CD4-positive, alpha-beta memory T cell (primary cell): ENCODE measurements at regions of chr14 and their contacts with region 1.

Region 1: GRCh38 chr14:76918751-76919543 is 92.7 kb downstream of the LRRC74A start:
- DNase-seq: no peak
- H3K4me3 ChIP-seq: no peak overlapping the region
- H3K4me3 Mint-ChIP-seq: peak overlapping the region in 1 of 8 donors; percentile 15
- H3K27ac ChIP-seq: no peak overlapping the region
- H3K27ac Mint-ChIP-seq: peak overlapping the region in 2 of 7 donors; percentile 46 to 57
- H3K4me1 ChIP-seq: peaks cover 32% of the 10 kb centered on the region
- H3K4me1 Mint-ChIP-seq: peaks cover 18 to 59% (median 43%) of the 10 kb centered on the region in 4 donors
- H3K27me3 ChIP-seq: no peaks in the 10 kb centered on the region
- H3K27me3 Mint-ChIP-seq: no peaks in the 10 kb centered on the region

Region 2: GRCh38 chr14:75989134-75989533 is 929.8 kb before region 1 on chr14:
- CTCF ChIA-PET with region 1: no interaction called
- POLR2A ChIA-PET with region 1: no interaction called
- intact Hi-C with region 1: no loop called
- DNase-seq: no peak
- H3K4me3 ChIP-seq: no peak overlapping the region
- H3K4me3 Mint-ChIP-seq: no peak overlapping the region
- H3K27ac ChIP-seq: no peak overlapping the region
- H3K27ac Mint-ChIP-seq: no peak overlapping the region
- H3K4me1 ChIP-seq: peaks cover 13% of the 10 kb centered on the region
- H3K4me1 Mint-ChIP-seq: peaks cover 9 to 23% (median 14%) of the 10 kb centered on the region in 4 donors
- H3K27me3 ChIP-seq: no peaks in the 10 kb centered on the region
- H3K27me3 Mint-ChIP-seq: no peaks in the 10 kb centered on the region

Region 3: GRCh38 chr14:76876076-76876475 is 42.9 kb before region 1 on chr14:
- CTCF ChIA-PET with region 1: interaction called, 162 read pairs
- POLR2A ChIA-PET with region 1: interaction called, 3 read pairs
- intact Hi-C with region 1: no loop called
- DNase-seq: peak in 4 of 5 donors; percentile 41 to 50 (median 44)
- H3K4me3 ChIP-seq: no peak overlapping the region
- H3K4me3 Mint-ChIP-seq: no peak overlapping the region
- H3K27ac ChIP-seq: no peak overlapping the region
- H3K27ac Mint-ChIP-seq: peak overlapping the region in 2 of 7 donors; percentile 10 to 31
- H3K4me1 ChIP-seq: no peaks in the 10 kb centered on the region
- H3K4me1 Mint-ChIP-seq: no peaks in the 10 kb centered on the region
- H3K27me3 ChIP-seq: no peaks in the 10 kb centered on the region
- H3K27me3 Mint-ChIP-seq: peaks cover 0 to 3% of the 10 kb centered on the region in 2 donors

Region 4: GRCh38 chr14:76947078-76947837 is 28.3 kb after region 1 on chr14:
- CTCF ChIA-PET with region 1: interaction called, 49 read pairs
- POLR2A ChIA-PET with region 1: interaction called, 5 read pairs
- intact Hi-C with region 1: no loop called
- DNase-seq: peak; percentile 68 to 82 (median 72)
- H3K4me3 ChIP-seq: peak overlapping the region in 1 of 2 donors; percentile 19
- H3K4me3 Mint-ChIP-seq: peak overlapping the region in 7 of 8 donors; percentile 4 to 65 (median 57)
- H3K27ac ChIP-seq: peak overlapping the region; percentile 33
- H3K27ac Mint-ChIP-seq: peak overlapping the region; percentile 37 to 93 (median 87)
- H3K4me1 ChIP-seq: peaks cover 20% of the 10 kb centered on the region
- H3K4me1 Mint-ChIP-seq: peaks cover 16 to 39% (median 24%) of the 10 kb centered on the region in 4 donors
- H3K27me3 ChIP-seq: no peaks in the 10 kb centered on the region
- H3K27me3 Mint-ChIP-seq: no peaks in the 10 kb centered on the region

Region 5: GRCh38 chr14:77023001-77023996 is 104.4 kb after region 1 on chr14:
- CTCF ChIA-PET with region 1: interaction called, 17 read pairs
- POLR2A ChIA-PET with region 1: interaction called, 22 read pairs
- intact Hi-C with region 1: no loop called
- DNase-seq: no peak
- H3K4me3 ChIP-seq: peak overlapping the region in 1 of 2 donors; percentile 9
- H3K4me3 Mint-ChIP-seq: peak overlapping the region; percentile 30 to 73 (median 65)
- H3K27ac ChIP-seq: no peak overlapping the region
- H3K27ac Mint-ChIP-seq: peak overlapping the region; percentile 66 to 98 (median 83)
- H3K4me1 ChIP-seq: peaks cover 52% of the 10 kb centered on the region
- H3K4me1 Mint-ChIP-seq: peaks cover 26 to 49% (median 37%) of the 10 kb centered on the region in 4 donors
- H3K27me3 ChIP-seq: no peaks in the 10 kb centered on the region
- H3K27me3 Mint-ChIP-seq: no peaks in the 10 kb centered on the region

Region 6: GRCh38 chr14:77040059-77040740 is 121.3 kb after region 1 on chr14:
- CTCF ChIA-PET with region 1: interaction called, 360 read pairs
- POLR2A ChIA-PET with region 1: interaction called, 9 read pairs
- intact Hi-C with region 1: no loop called
- DNase-seq: peak; percentile 96 to 99 (median 99)
- H3K4me3 ChIP-seq: peak overlapping the region; percentile 8 to 53
- H3K4me3 Mint-ChIP-seq: peak overlapping the region; percentile 84 to 93 (median 86)
- H3K27ac ChIP-seq: peak overlapping the region; percentile 95
- H3K27ac Mint-ChIP-seq: peak overlapping the region; percentile 97 to 100 (median 99)
- H3K4me1 ChIP-seq: peaks cover 94% of the 10 kb centered on the region
- H3K4me1 Mint-ChIP-seq: peaks cover 50 to 97% (median 84%) of the 10 kb centered on the region in 4 donors
- H3K27me3 ChIP-seq: no peaks in the 10 kb centered on the region
- H3K27me3 Mint-ChIP-seq: no peaks in the 10 kb centered on the region

Region 7: GRCh38 chr14:77067632-77068514 is 148.9 kb after region 1 on chr14:
- CTCF ChIA-PET with region 1: interaction called, 289 read pairs
- POLR2A ChIA-PET with region 1: no interaction called
- intact Hi-C with region 1: no loop called
- DNase-seq: peak in 4 of 5 donors; percentile 45 to 63 (median 58)
- H3K4me3 ChIP-seq: no peak overlapping the region
- H3K4me3 Mint-ChIP-seq: no peak overlapping the region
- H3K27ac ChIP-seq: no peak overlapping the region
- H3K27ac Mint-ChIP-seq: no peak overlapping the region
- H3K4me1 ChIP-seq: no peaks in the 10 kb centered on the region
- H3K4me1 Mint-ChIP-seq: peaks cover 0 to 3% (median under 1%) of the 10 kb centered on the region in 4 donors
- H3K27me3 ChIP-seq: no peaks in the 10 kb centered on the region
- H3K27me3 Mint-ChIP-seq: peaks cover 0 to 4% of the 10 kb centered on the region in 2 donors